RWPE1 (cell line): ENCODE measurements at regions of chr6 and their contacts with region 1.

Region 1: DNA sequence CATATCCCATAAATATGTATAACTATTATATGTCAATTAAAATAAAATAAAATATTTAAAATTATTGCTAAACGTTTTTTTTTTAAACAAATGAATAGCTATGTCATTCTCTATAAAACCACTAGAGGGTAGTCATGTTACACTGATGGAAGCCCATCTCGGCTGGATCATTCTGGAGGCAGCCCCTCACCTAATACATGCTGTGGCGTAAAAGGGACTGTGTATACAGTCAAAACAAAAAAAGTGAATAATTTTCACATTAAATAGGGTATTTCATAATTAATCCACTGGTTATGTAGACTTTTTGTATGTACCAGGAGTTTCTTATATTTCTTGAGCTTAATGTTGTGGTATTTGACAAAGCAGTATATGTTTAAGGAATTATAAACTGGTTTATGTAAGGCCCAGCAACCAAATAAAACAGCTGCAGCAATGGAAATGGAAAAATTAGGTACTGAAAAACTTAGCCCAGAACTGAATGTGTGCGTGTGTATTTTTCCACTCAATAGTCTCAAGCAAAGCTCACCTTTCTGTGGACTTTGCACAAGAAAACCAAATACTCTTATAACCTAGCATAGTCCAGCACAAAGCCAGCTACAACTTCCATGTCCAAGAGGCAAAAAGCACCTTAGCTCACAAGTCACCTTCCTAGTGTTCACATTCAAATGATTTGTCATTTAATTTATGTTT is 81.7 kb downstream of the COL9A1 start:
- DNase-seq: peak; percentile 39
- H3K27ac ChIP-seq: no peak overlapping the region
- CTCF ChIP-seq: peak; percentile 72

Region 2: DNA sequence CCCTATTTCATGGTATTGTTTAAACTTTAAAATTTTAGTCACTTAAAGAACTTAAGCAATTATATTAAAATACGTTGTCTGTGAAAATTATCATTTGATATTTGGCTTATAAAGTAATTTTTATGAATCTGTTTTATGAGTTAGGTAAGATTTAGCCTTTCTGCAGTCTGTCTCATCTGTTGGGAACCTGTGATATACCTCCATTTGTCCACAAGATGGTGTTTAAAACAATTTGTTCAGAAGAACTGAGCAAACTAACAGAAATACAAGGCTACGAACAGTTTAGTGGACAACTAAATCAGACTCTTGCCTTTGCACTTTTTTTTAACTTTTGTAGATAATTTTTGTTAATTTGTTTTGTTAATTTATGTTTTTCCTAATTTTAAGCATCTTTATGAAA is 10.7 kb before region 1 on chr6:
- CTCF ChIA-PET with region 1: interaction called, 10 read pairs
- POLR2A ChIA-PET with region 1: no interaction called
- DNase-seq: peak; percentile 11
- H3K27ac ChIP-seq: no peak overlapping the region
- CTCF ChIP-seq: 0 out of 2 replicates have a peak, but pooled peaks have one; percentile 12

Region 3: GRCh38 chr6:70231311-70231710 is 10.1 kb after region 1 on chr6:
- CTCF ChIA-PET with region 1: interaction called, 19 read pairs
- POLR2A ChIA-PET with region 1: no interaction called
- DNase-seq: no peak
- H3K27ac ChIP-seq: no peak overlapping the region
- CTCF ChIP-seq: no peak

Region 4: DNA sequence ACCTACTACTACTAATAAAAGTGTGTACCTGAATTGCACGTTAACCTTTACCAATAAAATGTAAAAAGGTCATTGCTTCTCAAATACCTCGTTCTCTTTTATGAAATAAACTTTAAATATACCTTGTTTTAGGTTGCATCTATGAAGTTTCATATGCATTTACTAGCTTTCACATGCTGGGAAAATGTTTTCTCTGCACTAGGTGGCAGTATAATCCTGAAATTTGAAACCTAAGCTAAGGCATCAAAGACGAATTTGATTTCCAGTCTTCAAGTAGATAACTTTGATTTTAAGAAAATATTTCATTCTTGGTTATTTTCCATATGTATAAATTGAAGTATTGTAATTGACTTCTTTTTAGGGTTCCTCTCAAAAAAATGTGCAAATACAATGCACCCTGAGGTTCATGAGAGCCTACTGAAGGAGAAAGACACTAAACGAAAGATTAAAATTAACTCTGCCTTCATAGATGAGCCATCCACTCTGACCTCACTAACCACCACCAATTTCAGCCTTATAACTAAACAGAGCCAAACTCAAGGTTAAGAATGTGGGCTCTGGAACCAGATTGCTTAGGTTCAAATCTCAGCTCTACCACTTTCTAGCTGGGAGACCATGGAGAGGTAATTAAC is 89.0 kb after region 1 on chr6:
- CTCF ChIA-PET with region 1: interaction called, 15 read pairs
- POLR2A ChIA-PET with region 1: no interaction called
- DNase-seq: peak; percentile 8
- H3K27ac ChIP-seq: no peak overlapping the region
- CTCF ChIP-seq: peak; percentile 68

Region 5: GRCh38 chr6:70857387-70858077 is 636.4 kb after region 1 on chr6:
- CTCF ChIA-PET with region 1: no interaction called
- POLR2A ChIA-PET with region 1: no interaction called
- DNase-seq: no peak
- H3K27ac ChIP-seq: no peak overlapping the region
- CTCF ChIP-seq: no peak

Region 6: GRCh38 chr6:70955441-70956190 is 734.4 kb after region 1 on chr6:
- CTCF ChIA-PET with region 1: interaction called, 17 read pairs
- POLR2A ChIA-PET with region 1: interaction called, 3 read pairs
- DNase-seq: peak; percentile 63
- H3K27ac ChIP-seq: no peak overlapping the region
- CTCF ChIP-seq: peak; percentile 93